A673 (cell line): ENCODE measurements at regions of chr17 and their contacts with region 1.

Region 1: DNA sequence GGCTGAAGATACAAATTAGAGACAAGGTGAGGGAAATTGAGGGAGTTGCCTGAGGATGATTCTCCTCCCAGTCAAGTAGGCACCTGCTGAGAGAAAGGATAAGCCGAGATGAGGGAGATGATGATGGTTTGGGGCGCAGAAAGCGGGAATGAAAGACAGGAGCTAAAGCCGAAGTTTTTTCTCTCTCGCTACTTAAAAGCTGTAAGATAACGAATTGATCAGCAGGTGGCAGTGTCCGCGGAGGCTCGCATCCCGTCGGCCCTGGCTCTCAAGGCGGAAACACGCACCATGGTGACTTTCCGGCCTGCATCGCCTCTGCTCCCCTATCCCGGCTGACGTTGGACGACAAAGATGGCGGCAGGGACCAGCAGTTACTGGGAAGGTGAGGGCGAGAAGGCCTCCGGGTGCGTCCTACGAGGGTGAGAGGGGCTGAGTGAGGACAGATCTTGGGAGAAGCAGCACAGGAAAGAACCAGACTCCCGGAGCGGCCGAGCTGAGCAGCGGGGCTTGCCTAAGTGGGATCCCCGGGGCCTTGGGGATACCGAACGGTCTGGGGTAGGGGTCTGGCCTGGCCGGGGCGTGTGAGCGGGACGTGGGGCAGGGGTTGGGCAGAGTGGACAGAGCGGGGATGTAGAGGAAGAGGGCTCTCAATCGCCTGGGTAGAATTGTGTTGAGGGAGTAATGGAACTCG is at the start of gene GOSR1:
- DNase-seq: peak; percentile 97
- H3K4me3 ChIP-seq: peak within 1 kb of the TSS; percentile 89
- H3K27ac ChIP-seq: peak within 1 kb of the TSS; percentile 95
- H3K4me1 ChIP-seq: no peaks in the 10 kb centered on the region
- H3K27me3 ChIP-seq: no peaks in the 10 kb centered on the region
- CTCF ChIP-seq: peak; percentile 84
- total RNA-seq, gene GOSR1: 61.2 and 69.1 TPM in 2 replicates

Region 2: DNA sequence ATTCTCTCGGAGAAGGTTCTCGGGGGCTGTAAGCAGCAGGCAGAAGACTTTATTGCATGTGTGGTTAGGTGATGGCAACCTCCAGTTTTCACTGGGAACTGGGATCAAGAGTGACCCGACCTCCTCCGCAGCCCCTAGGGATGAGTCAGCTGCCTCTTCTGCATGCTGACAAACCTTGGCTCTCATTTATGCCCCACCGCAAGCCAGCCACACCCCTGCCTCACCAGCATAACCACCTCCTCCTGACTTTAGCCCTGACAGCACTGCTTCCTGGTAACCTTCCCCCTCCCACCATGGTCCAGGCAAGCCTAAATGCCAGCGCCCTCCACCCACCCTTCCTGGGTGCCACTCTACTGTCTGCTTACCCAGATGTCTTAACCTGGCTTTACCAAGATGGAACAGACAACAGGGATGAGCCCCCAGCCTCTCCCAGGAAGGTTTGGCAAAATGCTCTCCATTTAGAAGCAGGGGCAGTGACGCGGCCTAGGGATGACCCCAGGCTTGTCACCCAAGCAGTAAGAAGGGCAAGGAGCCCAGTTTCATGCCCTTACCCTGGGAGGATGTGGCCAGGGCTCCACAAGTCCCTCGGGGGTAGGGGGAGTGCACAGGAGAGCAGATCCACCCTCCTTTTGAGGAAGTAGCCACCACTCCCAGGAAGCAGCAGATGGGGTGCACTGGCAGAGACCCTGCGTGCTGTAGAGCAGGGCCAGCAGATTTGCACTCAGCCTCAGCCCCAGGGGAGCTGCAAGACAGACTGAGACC is 73.5 kb after region 1 on chr17:
- CTCF ChIA-PET with region 1: no interaction called
- POLR2A ChIA-PET with region 1: no interaction called
- intact Hi-C with region 1: no loop called
- DNase-seq: no peak
- H3K4me3 ChIP-seq: no peak overlapping the region
- H3K27ac ChIP-seq: no peak overlapping the region
- H3K4me1 ChIP-seq: no peaks in the 10 kb centered on the region
- H3K27me3 ChIP-seq: no peaks in the 10 kb centered on the region
- CTCF ChIP-seq: no peak

Region 3: DNA sequence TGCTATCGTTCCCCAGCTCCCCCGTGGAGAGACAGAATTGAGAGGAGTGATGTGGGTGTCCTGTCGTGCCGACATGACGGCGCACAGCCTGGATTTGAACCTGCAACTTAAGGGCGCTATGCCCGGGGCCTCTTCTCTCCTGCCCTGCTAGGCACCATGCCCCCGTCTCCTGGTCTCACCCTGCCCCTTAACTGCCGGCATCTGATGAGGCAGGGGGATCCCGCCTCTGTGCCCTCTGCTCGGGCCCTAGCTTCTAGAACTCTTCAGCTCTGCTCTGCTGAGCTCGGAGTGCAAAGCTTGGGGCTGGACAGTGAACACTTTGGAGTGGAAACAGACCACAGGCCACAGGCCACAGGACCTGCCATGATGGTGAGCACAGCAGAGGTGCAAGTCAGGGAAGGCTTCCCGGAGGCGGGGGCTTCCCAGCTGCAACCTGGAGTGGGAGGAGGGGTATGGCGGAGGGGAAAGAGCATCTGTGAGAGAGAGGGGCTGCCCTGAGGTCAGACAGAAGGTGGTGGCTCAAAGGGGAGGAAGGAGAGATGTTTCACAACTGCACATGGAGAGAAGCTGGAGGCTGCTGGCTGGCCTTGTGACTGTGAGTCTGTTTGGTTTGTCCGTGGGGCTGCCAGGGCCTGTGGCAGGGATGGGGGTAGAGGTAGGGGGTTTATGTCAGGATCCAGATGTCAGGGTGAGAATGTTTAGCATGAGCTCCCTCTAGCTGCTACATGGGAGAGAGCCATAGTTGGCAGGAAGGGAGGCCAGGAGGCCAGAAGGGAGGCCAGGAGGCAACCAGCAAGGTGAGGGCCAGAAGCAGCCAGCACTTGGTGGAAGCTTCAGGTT is 239.5 kb after region 1 on chr17:
- CTCF ChIA-PET with region 1: no interaction called
- POLR2A ChIA-PET with region 1: no interaction called
- intact Hi-C with region 1: loop called (anchors 10 kb)
- DNase-seq: no peak
- H3K4me3 ChIP-seq: no peak overlapping the region
- H3K27ac ChIP-seq: no peak overlapping the region
- H3K4me1 ChIP-seq: no peaks in the 10 kb centered on the region
- H3K27me3 ChIP-seq: no peaks in the 10 kb centered on the region
- CTCF ChIP-seq: 0 out of 2 replicates have a peak, but pooled peaks have one; percentile 22

Region 4: GRCh38 chr17:30824356-30825145 is 347.3 kb after region 1 on chr17 and contains the start of gene CRLF3:
- CTCF ChIA-PET with region 1: no interaction called
- POLR2A ChIA-PET with region 1: no interaction called
- intact Hi-C with region 1: loop called (anchors 10 kb)
- DNase-seq: peak; percentile 91
- H3K4me3 ChIP-seq: peak within 1 kb of the TSS; percentile 85
- H3K27ac ChIP-seq: peak within 1 kb of the TSS; percentile 84
- H3K4me1 ChIP-seq: peaks cover 6% of the 10 kb centered on the region
- H3K27me3 ChIP-seq: no peaks in the 10 kb centered on the region
- CTCF ChIP-seq: peak; percentile 42
- total RNA-seq, gene CRLF3: 14.9 and 17.9 TPM in 2 replicates